ENCODE measurements at regions of chr22 and their contacts with region 1.

Region 1: GRCh38 chr22:20495861-20496681 is 476 bp upstream of the KLHL22 start:
- DNase-seq: peak; percentile 94 to 97 (median 97)
- ATAC-seq: peak; percentile 97 to 98
- H3K4me3 ChIP-seq: peak overlapping the region; percentile 88
- H3K27ac ChIP-seq: peak overlapping the region; percentile 88
- H3K4me1 ChIP-seq: peaks cover 2% of the 10 kb centered on the region
- H3K27me3 ChIP-seq: no peaks in the 10 kb centered on the region

Region 2: GRCh38 chr22:20430720-20431510 is 65.2 kb before region 1 on chr22:
- intact Hi-C with region 1: loop called in 1 of 4 experiments (anchors 10 kb)
- DNase-seq: peak in 1 of 3 donors; percentile 74
- ATAC-seq: peak; percentile 17 to 29
- H3K4me3 ChIP-seq: no peak overlapping the region
- H3K27ac ChIP-seq: no peak overlapping the region
- H3K4me1 ChIP-seq: no peaks in the 10 kb centered on the region
- H3K27me3 ChIP-seq: no peaks in the 10 kb centered on the region

Region 3: GRCh38 chr22:20899827-20900423 is 403.9 kb after region 1 on chr22:
- intact Hi-C with region 1: no loop called
- DNase-seq: no peak
- ATAC-seq: no peak
- H3K4me3 ChIP-seq: no peak overlapping the region
- H3K27ac ChIP-seq: no peak overlapping the region
- H3K4me1 ChIP-seq: no peaks in the 10 kb centered on the region
- H3K27me3 ChIP-seq: no peaks in the 10 kb centered on the region

Measured in right cardiac atrium (tissue), 5 donors.